CD8-positive, alpha-beta memory T cell (primary cell): ENCODE measurements at regions of chr3 and their contacts with region 1.

Region 1: GRCh38 chr3:32467333-32468070 is 35.1 kb downstream of the CMTM6 start:
- DNase-seq: peak; percentile 67 to 82 (median 70)
- H3K4me3 ChIP-seq: peak overlapping the region; percentile 43
- H3K4me3 Mint-ChIP-seq: peak overlapping the region in 6 of 7 donors; percentile 22 to 64 (median 32)
- H3K27ac ChIP-seq: peak overlapping the region; percentile 16
- H3K27ac Mint-ChIP-seq: peak overlapping the region in 4 of 8 donors; percentile 23 to 94 (median 66)
- H3K4me1 ChIP-seq: peaks cover 28% of the 10 kb centered on the region
- H3K4me1 Mint-ChIP-seq: peaks cover 13 to 58% (median 30%) of the 10 kb centered on the region in 3 donors
- H3K27me3 ChIP-seq: no peaks in the 10 kb centered on the region
- H3K27me3 Mint-ChIP-seq: no peaks in the 10 kb centered on the region

Region 2: DNA sequence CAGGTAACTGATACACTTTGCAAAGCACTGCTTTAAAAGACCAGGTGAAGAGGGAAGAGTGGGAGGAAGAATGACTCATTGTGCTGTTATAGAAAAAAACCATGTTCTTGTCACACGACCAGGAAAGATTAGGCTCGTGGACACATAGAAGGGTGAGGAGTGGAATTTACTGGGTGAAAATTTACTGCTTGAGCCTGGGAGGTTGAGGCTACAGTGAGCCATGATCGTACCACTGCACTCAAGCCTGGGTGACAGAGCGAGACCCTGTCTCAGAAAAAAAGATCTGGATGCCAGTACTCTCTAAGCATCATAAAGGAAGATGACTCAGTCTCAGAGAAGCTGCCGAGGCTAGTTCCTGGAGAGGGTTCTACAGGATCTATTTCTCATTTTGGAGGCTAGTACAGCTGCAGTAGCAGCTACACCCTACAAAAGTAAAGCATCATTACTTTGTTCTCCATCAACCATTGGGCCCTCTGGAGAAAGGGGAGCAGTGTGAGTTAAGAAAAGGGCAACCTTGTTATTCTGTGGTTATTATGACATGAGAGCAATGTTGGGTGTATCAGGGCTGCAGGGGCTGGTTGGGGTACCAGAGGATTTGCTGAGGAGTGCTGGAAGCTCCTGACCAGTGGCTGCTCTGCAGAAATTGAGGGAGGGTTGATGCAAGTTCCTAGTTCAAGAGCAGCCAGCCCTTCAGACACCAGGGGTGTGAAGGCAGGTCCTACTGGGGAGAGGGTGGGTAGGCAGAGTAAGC is 153.6 kb before region 1 on chr3:
- CTCF ChIA-PET with region 1: interaction called, 12 read pairs
- POLR2A ChIA-PET with region 1: no interaction called
- DNase-seq: no peak
- H3K4me3 ChIP-seq: no peak overlapping the region
- H3K4me3 Mint-ChIP-seq: peak overlapping the region in 4 of 7 donors; percentile 27 to 70 (median 48)
- H3K27ac ChIP-seq: no peak overlapping the region
- H3K27ac Mint-ChIP-seq: peak overlapping the region; percentile 29 to 87 (median 71)
- H3K4me1 ChIP-seq: peaks cover 11% of the 10 kb centered on the region
- H3K4me1 Mint-ChIP-seq: peaks cover 10 to 18% (median 13%) of the 10 kb centered on the region in 3 donors
- H3K27me3 ChIP-seq: no peaks in the 10 kb centered on the region
- H3K27me3 Mint-ChIP-seq: no peaks in the 10 kb centered on the region

Region 3: DNA sequence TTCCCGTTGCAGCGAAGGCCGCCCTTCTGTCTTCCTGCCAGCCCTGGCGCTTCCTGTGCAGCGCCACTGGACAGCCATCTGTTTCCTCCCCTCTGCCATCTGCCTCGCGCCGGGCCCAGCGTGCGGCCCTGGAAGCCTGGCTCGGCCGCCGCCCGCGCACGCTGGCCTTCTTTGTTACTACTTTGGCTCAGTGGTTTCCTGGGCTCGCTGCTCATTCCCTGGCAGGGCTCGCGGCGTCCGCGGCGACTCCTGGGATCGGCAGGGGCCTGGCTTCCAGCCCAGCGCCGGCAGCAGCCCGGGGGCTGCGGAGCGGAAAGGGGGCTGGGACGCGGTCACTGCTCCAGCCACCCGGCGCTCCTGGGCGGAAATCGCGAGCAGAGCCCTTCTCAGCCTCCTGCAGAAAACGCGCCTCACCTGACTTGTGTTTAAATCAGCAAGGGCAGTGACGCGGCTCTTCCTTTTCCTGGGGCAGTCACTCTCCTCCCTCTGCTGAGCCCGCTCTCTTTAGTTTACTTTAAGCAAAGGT is 65.9 kb before region 1 on chr3:
- CTCF ChIA-PET with region 1: interaction called, 131 read pairs
- POLR2A ChIA-PET with region 1: interaction called, 3 read pairs
- DNase-seq: peak; percentile 38 to 78 (median 57)
- H3K4me3 ChIP-seq: peak overlapping the region; percentile 67
- H3K4me3 Mint-ChIP-seq: peak overlapping the region; percentile 84 to 98 (median 91)
- H3K27ac ChIP-seq: peak overlapping the region; percentile 73
- H3K27ac Mint-ChIP-seq: peak overlapping the region; percentile 93 to 99 (median 96)
- H3K4me1 ChIP-seq: peaks cover 48% of the 10 kb centered on the region
- H3K4me1 Mint-ChIP-seq: peaks cover 52 to 90% (median 65%) of the 10 kb centered on the region in 3 donors
- H3K27me3 ChIP-seq: no peaks in the 10 kb centered on the region
- H3K27me3 Mint-ChIP-seq: no peaks in the 10 kb centered on the region

Region 4: GRCh38 chr3:32414520-32415202 is 52.8 kb before region 1 on chr3:
- CTCF ChIA-PET with region 1: interaction called, 37 read pairs
- POLR2A ChIA-PET with region 1: interaction called, 4 read pairs
- DNase-seq: peak in 3 of 5 donors; percentile 51 to 72 (median 71)
- H3K4me3 ChIP-seq: no peak overlapping the region
- H3K4me3 Mint-ChIP-seq: peak overlapping the region; percentile 5 to 84 (median 60)
- H3K27ac ChIP-seq: no peak overlapping the region
- H3K27ac Mint-ChIP-seq: peak overlapping the region; percentile 94 to 98 (median 96)
- H3K4me1 ChIP-seq: peaks cover 72% of the 10 kb centered on the region
- H3K4me1 Mint-ChIP-seq: peaks cover 45 to 93% (median 66%) of the 10 kb centered on the region in 3 donors
- H3K27me3 ChIP-seq: no peaks in the 10 kb centered on the region
- H3K27me3 Mint-ChIP-seq: no peaks in the 10 kb centered on the region

Region 5: DNA sequence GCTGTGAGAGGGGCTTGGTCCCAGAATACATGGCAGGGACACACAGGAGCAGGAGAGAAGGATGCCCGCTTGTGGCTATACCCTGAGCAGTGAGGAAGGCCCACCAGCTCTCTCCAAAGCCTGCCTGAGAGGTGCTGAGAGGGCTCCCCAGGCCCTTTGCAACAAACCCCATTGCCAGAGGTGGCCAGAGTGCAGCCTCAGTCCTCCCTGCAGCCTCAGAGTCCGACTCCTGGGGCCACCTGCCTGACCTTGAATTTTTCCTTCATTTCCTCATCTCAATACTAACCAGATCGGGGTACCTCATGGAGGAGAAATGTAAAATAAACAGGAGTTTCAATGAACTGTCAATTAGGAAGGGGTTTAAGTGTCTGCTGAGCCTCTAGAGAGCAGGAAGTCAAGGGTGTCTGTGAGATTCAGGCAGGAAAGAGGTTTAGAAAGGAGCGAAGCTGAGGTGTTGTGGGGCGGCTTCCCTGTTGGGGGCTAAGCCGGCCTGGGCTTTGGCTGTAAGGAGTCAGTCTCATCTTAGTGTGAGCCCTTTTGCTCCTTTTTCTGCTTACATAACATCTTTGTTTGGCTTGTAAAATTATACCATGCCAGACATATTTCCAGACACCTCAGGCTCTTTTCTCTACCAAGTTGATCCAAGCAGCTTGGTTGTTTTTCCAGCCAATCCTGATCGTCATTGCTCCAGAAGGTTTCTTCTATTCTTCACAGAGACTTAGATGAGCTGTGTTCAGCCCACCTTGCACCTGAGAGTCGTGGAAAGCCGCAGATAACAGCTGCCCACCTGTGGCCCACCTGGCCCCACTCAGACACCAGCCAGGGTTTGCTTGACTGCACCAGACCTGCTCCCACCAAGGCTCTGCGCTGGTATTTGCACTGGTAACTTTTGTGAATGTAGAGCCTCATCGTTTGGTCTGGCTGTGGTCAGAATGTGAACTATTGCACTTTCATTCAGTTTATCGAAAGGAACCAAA is 39.1 kb before region 1 on chr3:
- CTCF ChIA-PET with region 1: interaction called, 81 read pairs
- POLR2A ChIA-PET with region 1: interaction called, 3 read pairs
- DNase-seq: peak; percentile 23 to 73 (median 63)
- H3K4me3 ChIP-seq: peak overlapping the region; percentile 48
- H3K4me3 Mint-ChIP-seq: peak overlapping the region; percentile 48 to 88 (median 77)
- H3K27ac ChIP-seq: peak overlapping the region; percentile 35
- H3K27ac Mint-ChIP-seq: peak overlapping the region; percentile 92 to 98 (median 96)
- H3K4me1 ChIP-seq: peaks cover 91% of the 10 kb centered on the region
- H3K4me1 Mint-ChIP-seq: peaks cover 85 to 98% (median 93%) of the 10 kb centered on the region in 3 donors
- H3K27me3 ChIP-seq: no peaks in the 10 kb centered on the region
- H3K27me3 Mint-ChIP-seq: peaks cover 0 to 1% of the 10 kb centered on the region in 2 donors

Region 6: DNA sequence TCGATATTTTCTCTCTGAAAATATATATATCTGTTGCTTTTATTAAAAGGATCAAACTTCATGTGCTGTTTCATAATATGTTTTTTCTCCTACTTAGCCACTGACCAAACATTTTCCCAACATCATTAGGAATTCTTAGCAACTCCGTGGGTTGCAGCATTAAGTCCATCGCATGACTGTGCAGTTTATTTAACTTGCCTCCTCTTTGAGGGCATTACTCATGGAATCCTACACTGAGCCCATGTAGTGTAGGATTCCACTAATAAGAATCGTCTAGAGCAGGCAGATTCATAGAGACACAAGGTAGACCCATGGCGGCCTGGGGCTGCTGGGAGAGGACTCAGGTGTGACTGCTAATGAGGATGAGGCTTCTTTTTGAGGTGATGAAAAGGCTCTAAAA is 14.2 kb before region 1 on chr3:
- CTCF ChIA-PET with region 1: interaction called, 41 read pairs
- POLR2A ChIA-PET with region 1: interaction called, 3 read pairs
- DNase-seq: no peak
- H3K4me3 ChIP-seq: no peak overlapping the region
- H3K4me3 Mint-ChIP-seq: no peak overlapping the region
- H3K27ac ChIP-seq: no peak overlapping the region
- H3K27ac Mint-ChIP-seq: peak overlapping the region in 6 of 8 donors; percentile 32 to 79 (median 56)
- H3K4me1 ChIP-seq: peaks cover 41% of the 10 kb centered on the region
- H3K4me1 Mint-ChIP-seq: peaks cover 36 to 69% (median 51%) of the 10 kb centered on the region in 3 donors
- H3K27me3 ChIP-seq: no peaks in the 10 kb centered on the region
- H3K27me3 Mint-ChIP-seq: no peaks in the 10 kb centered on the region